BJ (cell line): ENCODE measurements at regions of chr7 and their contacts with region 1.

Region 1: GRCh38 chr7:106542550-106543220 is 118.3 kb downstream of the CCDC71L start:
- DNase-seq: peak; percentile 69
- H3K4me3 ChIP-seq: no peak overlapping the region
- H3K27me3 ChIP-seq: no peaks in the 10 kb centered on the region
- CTCF ChIP-seq: peak; percentile 64

Region 2: GRCh38 chr7:106176414-106177299 is 366.0 kb before region 1 on chr7:
- CTCF ChIA-PET with region 1: interaction called, 16 read pairs
- POLR2A ChIA-PET with region 1: no interaction called
- DNase-seq: no peak
- H3K4me3 ChIP-seq: no peak overlapping the region
- H3K27me3 ChIP-seq: no peaks in the 10 kb centered on the region
- CTCF ChIP-seq: peak; percentile 97

Region 3: GRCh38 chr7:106273009-106273668 is 269.5 kb before region 1 on chr7:
- CTCF ChIA-PET with region 1: no interaction called
- POLR2A ChIA-PET with region 1: interaction called, 20 read pairs
- DNase-seq: no peak
- H3K4me3 ChIP-seq: no peak overlapping the region
- H3K27me3 ChIP-seq: no peaks in the 10 kb centered on the region
- CTCF ChIP-seq: no peak

Region 4: GRCh38 chr7:106563466-106564150 is 20.9 kb after region 1 on chr7:
- CTCF ChIA-PET with region 1: interaction called, 10 read pairs
- POLR2A ChIA-PET with region 1: no interaction called
- DNase-seq: no peak
- H3K4me3 ChIP-seq: no peak overlapping the region
- H3K27me3 ChIP-seq: no peaks in the 10 kb centered on the region
- CTCF ChIP-seq: no peak

Region 5: DNA sequence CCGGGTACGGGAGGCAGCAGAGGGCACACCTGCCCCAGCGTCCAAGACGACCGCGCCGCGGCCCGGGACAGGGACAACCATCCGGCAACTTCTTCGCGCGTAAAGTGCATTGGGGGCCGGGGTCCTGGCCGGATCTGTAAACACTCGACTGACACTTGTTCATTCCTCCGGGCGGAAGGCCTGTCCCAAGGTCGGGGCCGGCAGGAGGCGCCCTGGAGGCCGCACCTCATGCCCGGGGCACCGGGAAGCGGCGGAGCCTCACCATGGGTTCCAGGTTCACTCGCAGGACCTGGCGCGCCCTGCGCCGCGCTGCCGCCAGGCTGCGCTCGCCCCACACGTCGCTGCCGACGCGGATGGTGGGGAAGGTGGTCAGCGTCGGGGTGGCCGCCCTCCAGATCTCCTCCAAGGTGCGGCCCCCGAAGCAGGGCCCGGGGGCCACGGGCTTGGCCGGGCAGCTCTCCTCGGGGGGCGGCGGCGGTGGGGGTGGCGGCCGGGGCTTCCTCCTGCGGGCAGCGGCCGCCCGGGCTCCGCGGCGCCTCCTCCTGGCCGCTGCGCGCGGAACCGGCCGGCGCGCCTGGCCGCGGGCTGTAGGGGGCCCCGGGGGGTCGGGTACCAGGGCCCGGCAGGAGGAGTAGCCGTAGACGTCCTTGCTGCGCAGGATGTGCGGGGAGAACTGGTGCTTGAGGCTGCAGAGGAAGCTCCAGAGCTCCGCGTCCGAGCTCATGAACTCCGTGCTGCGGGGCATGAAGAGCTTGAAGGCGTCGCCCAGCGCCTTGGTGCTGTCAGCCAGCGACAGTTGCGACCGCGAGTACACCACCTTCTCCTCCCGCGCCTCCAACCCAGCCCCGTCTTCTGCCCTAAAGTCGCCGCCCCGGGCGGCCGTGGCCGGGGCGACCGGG is 117.5 kb after region 1 on chr7:
- CTCF ChIA-PET with region 1: interaction called, 53 read pairs
- POLR2A ChIA-PET with region 1: interaction called, 6 read pairs
- DNase-seq: no peak
- H3K4me3 ChIP-seq: peak overlapping the region; percentile 99
- H3K27me3 ChIP-seq: no peaks in the 10 kb centered on the region
- CTCF ChIP-seq: peak; percentile 80

Region 6: GRCh38 chr7:106720641-106721040 is 178.0 kb after region 1 on chr7:
- CTCF ChIA-PET with region 1: interaction called, 3 read pairs
- POLR2A ChIA-PET with region 1: interaction called, 16 read pairs
- DNase-seq: no peak
- H3K4me3 ChIP-seq: no peak overlapping the region
- H3K27me3 ChIP-seq: no peaks in the 10 kb centered on the region
- CTCF ChIP-seq: no peak

Region 7: GRCh38 chr7:106736508-106737201 is 194.0 kb after region 1 on chr7:
- CTCF ChIA-PET with region 1: interaction called, 46 read pairs
- POLR2A ChIA-PET with region 1: interaction called, 4 read pairs
- DNase-seq: no peak
- H3K4me3 ChIP-seq: no peak overlapping the region
- H3K27me3 ChIP-seq: no peaks in the 10 kb centered on the region
- CTCF ChIP-seq: peak; percentile 80